SK-N-SH (cell line): ENCODE measurements at regions of chr14 and their contacts with region 1.

Region 1: GRCh38 chr14:50532502-50533240 is at the start of gene MAP4K5:
- DNase-seq: peak; percentile 97
- H3K4me3 ChIP-seq: peak within 1 kb of the TSS; percentile 90
- H3K27ac ChIP-seq: peak within 1 kb of the TSS; percentile 91 to 96
- H3K4me1 ChIP-seq: peaks cover 15 to 24% of the 10 kb centered on the region in 2 experiments
- H3K27me3 ChIP-seq: no peaks in the 10 kb centered on the region
- CTCF ChIP-seq: peak; percentile 83
- EP300 ChIP-seq: no peak
- RAD21 ChIP-seq: peak; percentile 97
- polyA plus RNA-seq, gene MAP4K5: 28.1 and 31.8 TPM in 2 replicates

Region 2: GRCh38 chr14:50321009-50321660 is 211.5 kb before region 1 on chr14:
- CTCF ChIA-PET with region 1: interaction called, 56 read pairs
- POLR2A ChIA-PET with region 1: no interaction called
- DNase-seq: peak; percentile 72
- H3K4me3 ChIP-seq: peak overlapping the region; percentile 38 to 47
- H3K27ac ChIP-seq: peak overlapping the region; percentile 83 to 95
- H3K4me1 ChIP-seq: peaks cover 0 to 4% of the 10 kb centered on the region in 2 experiments; a peak in 3 of 4 replicates
- H3K27me3 ChIP-seq: no peaks in the 10 kb centered on the region
- CTCF ChIP-seq: peak; percentile 96
- EP300 ChIP-seq: no peak
- RAD21 ChIP-seq: peak; percentile 80

Region 3: DNA sequence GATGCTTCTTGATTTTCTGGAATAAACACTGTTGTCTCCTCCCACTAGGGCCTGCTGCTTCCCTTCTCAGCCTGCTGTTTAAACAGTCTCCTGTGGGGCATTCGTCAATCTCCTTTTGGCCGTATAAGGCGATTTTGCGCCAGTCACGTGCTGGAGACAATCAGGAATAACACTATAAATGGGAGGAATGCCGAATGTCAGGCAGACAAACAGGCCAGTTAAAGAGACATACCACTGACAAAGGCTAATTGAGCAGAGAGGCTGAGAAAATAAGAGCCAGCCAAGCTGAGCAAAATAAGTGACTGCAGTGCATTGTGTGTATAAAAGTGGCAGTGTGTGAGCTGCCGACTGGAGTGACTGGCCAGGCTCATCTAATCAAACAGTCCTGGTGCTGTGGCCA is 197.3 kb before region 1 on chr14:
- CTCF ChIA-PET with region 1: interaction called, 10 read pairs
- POLR2A ChIA-PET with region 1: interaction called, 5 read pairs
- DNase-seq: peak; percentile 55
- H3K4me3 ChIP-seq: no peak overlapping the region
- H3K27ac ChIP-seq: peak overlapping the region; percentile 49 to 98; a peak in 3 of 4 replicates
- H3K4me1 ChIP-seq: peaks cover 17 to 25% of the 10 kb centered on the region in 2 experiments; a peak in 3 of 4 replicates
- H3K27me3 ChIP-seq: no peaks in the 10 kb centered on the region
- CTCF ChIP-seq: peak; percentile 16; the same call in 1 of the 2 replicates
- EP300 ChIP-seq: no peak
- RAD21 ChIP-seq: 0 out of 2 replicates have a peak, but pooled peaks have one; percentile 30

Region 4: GRCh38 chr14:50342221-50343078 is 190.2 kb before region 1 on chr14:
- CTCF ChIA-PET with region 1: interaction called, 18 read pairs
- POLR2A ChIA-PET with region 1: interaction called, 6 read pairs
- DNase-seq: peak; percentile 78
- H3K4me3 ChIP-seq: peak overlapping the region; percentile 7 to 31; a peak in 2 of 4 replicates
- H3K27ac ChIP-seq: peak overlapping the region; percentile 27 to 70; a peak in 3 of 4 replicates
- H3K4me1 ChIP-seq: peaks cover 16 to 17% of the 10 kb centered on the region in 2 experiments
- H3K27me3 ChIP-seq: no peaks in the 10 kb centered on the region
- CTCF ChIP-seq: peak; percentile 54
- EP300 ChIP-seq: no peak
- RAD21 ChIP-seq: peak; percentile 91

Region 5: DNA sequence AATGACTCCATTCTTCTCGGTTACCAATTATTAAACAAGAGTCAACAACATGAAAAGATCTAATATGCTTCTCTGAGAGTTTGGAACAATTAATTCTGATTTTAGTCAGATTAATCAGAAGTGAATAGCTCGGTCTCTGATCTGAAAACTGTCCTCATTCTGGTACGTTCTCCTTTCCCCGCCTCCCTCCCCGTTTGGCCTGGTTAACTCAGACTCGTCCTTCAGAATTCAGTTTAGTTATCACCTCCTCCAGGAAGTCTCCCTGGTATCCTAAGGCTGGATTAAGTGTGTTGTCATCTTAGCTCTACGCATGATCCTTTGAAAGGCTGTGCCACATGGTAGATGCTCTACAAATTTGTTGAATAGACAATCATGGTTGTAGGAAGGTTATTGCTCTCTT is 22.5 kb before region 1 on chr14:
- CTCF ChIA-PET with region 1: no interaction called
- POLR2A ChIA-PET with region 1: no interaction called
- DNase-seq: no peak
- H3K4me3 ChIP-seq: no peak overlapping the region
- H3K27ac ChIP-seq: no peak overlapping the region; a peak in 1 of 4 replicates
- H3K4me1 ChIP-seq: no peaks in the 10 kb centered on the region; a peak in 1 of 4 replicates
- H3K27me3 ChIP-seq: no peaks in the 10 kb centered on the region
- CTCF ChIP-seq: no peak
- EP300 ChIP-seq: no peak
- RAD21 ChIP-seq: no peak

Region 6: DNA sequence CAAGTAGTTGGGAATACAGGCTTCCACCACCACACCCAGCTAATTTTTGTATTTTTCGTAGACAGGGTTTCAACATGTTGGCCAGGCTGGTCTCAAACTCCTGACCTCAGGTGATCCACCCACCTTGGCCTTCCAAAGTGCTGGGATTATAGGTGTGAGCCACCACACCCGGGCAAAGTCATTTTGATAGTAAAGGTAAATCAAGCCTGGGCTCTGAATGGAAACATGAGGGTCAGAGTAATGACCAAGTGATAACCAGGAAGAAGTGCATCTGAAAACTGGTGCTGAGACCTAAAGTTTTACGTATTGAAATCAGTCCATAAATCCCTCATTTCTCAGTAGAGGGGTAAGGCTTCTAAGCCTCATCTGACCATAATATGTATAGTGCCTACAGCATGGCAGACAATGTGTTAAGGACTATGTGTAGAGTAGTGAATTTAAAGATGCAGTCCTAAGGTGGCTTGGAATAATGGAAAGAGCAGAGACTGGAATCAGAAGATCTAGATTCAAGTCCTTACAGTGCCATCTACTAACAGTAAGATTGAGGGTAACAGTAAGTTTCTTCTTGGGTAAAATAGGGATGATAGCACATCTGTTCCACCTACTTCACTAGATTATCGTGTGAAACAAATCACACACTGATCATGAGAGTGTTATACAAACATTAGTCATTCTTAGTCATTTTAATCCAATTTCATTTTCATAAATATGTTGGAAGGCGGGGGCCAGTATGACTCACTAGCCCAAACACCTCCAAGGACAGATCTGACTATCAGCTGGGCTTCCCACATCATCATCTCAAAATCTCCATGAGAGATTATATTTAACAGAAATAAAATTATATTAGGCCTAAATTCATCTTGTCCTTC is 11.5 kb before region 1 on chr14:
- CTCF ChIA-PET with region 1: interaction called, 14 read pairs
- POLR2A ChIA-PET with region 1: no interaction called
- DNase-seq: no peak
- H3K4me3 ChIP-seq: no peak overlapping the region
- H3K27ac ChIP-seq: peak overlapping the region in 1 of 2 experiments; percentile 95; a peak in 3 of 4 replicates
- H3K4me1 ChIP-seq: peaks cover 5 to 21% of the 10 kb centered on the region in 2 experiments; a peak in 3 of 4 replicates
- H3K27me3 ChIP-seq: no peaks in the 10 kb centered on the region
- CTCF ChIP-seq: no peak
- EP300 ChIP-seq: peak in 1 of 2 experiments; percentile 44; a peak in 1 of 4 replicates
- RAD21 ChIP-seq: no peak

Region 7: GRCh38 chr14:50559990-50560930 is 27.6 kb after region 1 on chr14 and contains the start of gene ATL1:
- CTCF ChIA-PET with region 1: interaction called, 10 read pairs
- POLR2A ChIA-PET with region 1: interaction called, 3 read pairs
- DNase-seq: peak; percentile 88
- H3K4me3 ChIP-seq: peak within 1 kb of the TSS; percentile 81 to 87
- H3K27ac ChIP-seq: peak within 1 kb of the TSS; percentile 81 to 95
- H3K4me1 ChIP-seq: peaks cover 2 to 12% of the 10 kb centered on the region in 2 experiments; a peak in 2 of 4 replicates
- H3K27me3 ChIP-seq: no peaks in the 10 kb centered on the region
- CTCF ChIP-seq: no peak
- EP300 ChIP-seq: 0 out of 4 replicates have a peak, but pooled peaks of 1 of the 2 experiments have one; percentile 19
- RAD21 ChIP-seq: peak; percentile 23; the same call in 1 of the 2 replicates
- polyA plus RNA-seq, gene ATL1: 7.3 and 9.0 TPM in 2 replicates